PC-3 (cell line): ENCODE measurements at regions of chr12 and their contacts with region 1.

Region 1: GRCh38 chr12:48758221-48758620 is 30.7 kb downstream of the ADCY6 start:
- DNase-seq: no peak
- ATAC-seq: no peak
- H3K4me3 ChIP-seq: no peak overlapping the region
- H3K27ac ChIP-seq: no peak overlapping the region
- H3K4me1 ChIP-seq: no peaks in the 10 kb centered on the region
- H3K27me3 ChIP-seq: no peaks in the 10 kb centered on the region
- CTCF ChIP-seq: no peak

Region 2: DNA sequence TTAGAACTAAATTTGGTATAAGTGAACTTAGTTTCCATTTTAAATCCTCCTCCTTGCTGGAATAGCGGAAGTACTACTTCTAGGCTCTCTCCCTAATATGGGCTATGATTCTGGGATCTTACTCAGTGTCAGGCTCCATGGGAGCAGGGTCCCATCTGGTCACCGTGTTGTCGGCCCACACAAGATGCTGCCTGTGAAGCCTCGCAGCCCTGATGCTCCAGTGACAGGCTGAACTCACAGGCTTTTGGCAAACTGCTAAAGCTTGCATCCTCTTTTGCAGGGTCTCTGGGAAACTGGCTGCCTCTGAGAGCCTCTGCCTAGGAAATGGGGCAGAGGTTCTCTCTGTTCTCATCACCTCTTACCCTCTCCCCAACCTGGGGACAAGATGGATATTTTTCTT is 1140.7 kb before region 1 on chr12:
- CTCF ChIA-PET with region 1: no interaction called
- POLR2A ChIA-PET with region 1: no interaction called
- intact Hi-C with region 1: no loop called
- DNase-seq: no peak
- ATAC-seq: no peak
- H3K4me3 ChIP-seq: no peak overlapping the region
- H3K27ac ChIP-seq: no peak overlapping the region
- H3K4me1 ChIP-seq: no peaks in the 10 kb centered on the region
- H3K27me3 ChIP-seq: no peaks in the 10 kb centered on the region
- CTCF ChIP-seq: no peak

Region 3: DNA sequence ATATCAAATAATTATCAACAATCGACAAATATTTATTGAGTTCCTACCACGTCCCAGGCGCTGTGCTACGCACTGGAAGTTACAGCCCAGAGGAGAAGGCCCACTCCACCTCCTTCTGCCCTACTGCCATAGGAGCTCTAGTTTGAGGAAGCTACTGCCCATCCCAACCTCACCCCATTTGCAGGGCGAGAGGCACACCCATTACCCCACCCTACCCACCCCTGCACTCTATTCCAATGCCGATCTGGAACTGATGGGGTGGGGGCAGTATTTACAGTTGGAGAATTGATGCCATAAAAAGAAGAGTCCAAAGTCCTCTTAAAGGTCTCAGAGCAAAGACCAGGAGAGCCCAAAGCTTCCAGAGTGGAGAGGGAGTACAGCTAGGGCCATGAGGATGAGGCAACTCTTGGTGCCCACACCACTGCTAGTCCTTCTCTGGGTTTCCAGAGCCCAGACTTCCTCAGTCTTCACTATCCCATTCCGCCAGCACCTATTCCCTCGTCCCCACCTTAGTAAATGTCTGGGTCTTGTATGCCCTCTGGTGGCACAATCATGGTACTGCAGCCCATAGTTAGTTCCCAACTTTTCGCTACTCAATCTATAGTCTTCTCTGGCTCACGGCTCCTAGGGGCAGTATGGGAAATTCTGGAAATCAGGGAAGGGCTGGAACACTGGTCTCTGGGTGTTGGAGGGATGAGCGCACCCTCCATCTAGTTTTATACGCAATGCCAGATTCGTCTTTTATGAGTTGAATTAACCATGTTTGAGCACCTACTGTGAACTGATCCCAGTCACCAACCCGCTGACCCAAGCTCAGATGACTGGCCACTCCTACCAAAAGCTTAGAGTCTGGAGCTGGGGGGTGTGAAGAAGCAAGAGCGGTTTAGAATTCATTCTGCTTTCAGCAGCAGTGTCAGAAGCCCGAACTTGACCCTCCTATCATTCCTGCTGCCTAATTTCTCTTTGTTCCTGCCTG is 37.5 kb after region 1 on chr12:
- CTCF ChIA-PET with region 1: interaction called, 15 read pairs
- POLR2A ChIA-PET with region 1: no interaction called
- intact Hi-C with region 1: loop called (anchors 1 kb)
- DNase-seq: peak; percentile 93
- ATAC-seq: peak; percentile 92
- H3K4me3 ChIP-seq: no peak overlapping the region
- H3K27ac ChIP-seq: no peak overlapping the region
- H3K4me1 ChIP-seq: peaks cover 10% of the 10 kb centered on the region
- H3K27me3 ChIP-seq: no peaks in the 10 kb centered on the region
- CTCF ChIP-seq: peak; percentile 98

Region 4: GRCh38 chr12:48814262-48815125 is 56.3 kb after region 1 on chr12:
- CTCF ChIA-PET with region 1: interaction called, 10 read pairs
- POLR2A ChIA-PET with region 1: no interaction called
- intact Hi-C with region 1: no loop called
- DNase-seq: peak; percentile 82
- ATAC-seq: peak; percentile 64
- H3K4me3 ChIP-seq: peak overlapping the region; percentile 86
- H3K27ac ChIP-seq: peak overlapping the region; percentile 30; the same call in 1 of the 2 replicates
- H3K4me1 ChIP-seq: peaks cover 36% of the 10 kb centered on the region
- H3K27me3 ChIP-seq: no peaks in the 10 kb centered on the region
- CTCF ChIP-seq: peak; percentile 99